ENCODE measurements at regions of chr12 and their contacts with region 1.

Region 1: GRCh38 chr12:50038336-50038735 is 13.0 kb upstream of the RACGAP1 start:
- DNase-seq: no peak
- H3K4me3 Mint-ChIP-seq: no peak overlapping the region
- H3K27ac Mint-ChIP-seq: no peak overlapping the region
- H3K4me1 Mint-ChIP-seq: peaks cover 4% of the 10 kb centered on the region
- H3K27me3 Mint-ChIP-seq: peaks cover 12% of the 10 kb centered on the region

Region 2: GRCh38 chr12:49959570-49960465 is 78.5 kb before region 1 on chr12:
- CTCF ChIA-PET with region 1: no interaction called
- POLR2A ChIA-PET with region 1: no interaction called
- DNase-seq: no peak
- H3K4me3 Mint-ChIP-seq: no peak overlapping the region
- H3K27ac Mint-ChIP-seq: no peak overlapping the region
- H3K4me1 Mint-ChIP-seq: peaks cover 7% of the 10 kb centered on the region
- H3K27me3 Mint-ChIP-seq: peaks cover 86% of the 10 kb centered on the region

Region 3: GRCh38 chr12:50006789-50007436 is 31.4 kb before region 1 on chr12:
- CTCF ChIA-PET with region 1: interaction called, 27 read pairs
- POLR2A ChIA-PET with region 1: no interaction called
- DNase-seq: no peak
- H3K4me3 Mint-ChIP-seq: no peak overlapping the region
- H3K27ac Mint-ChIP-seq: no peak overlapping the region
- H3K4me1 Mint-ChIP-seq: peaks cover 15% of the 10 kb centered on the region
- H3K27me3 Mint-ChIP-seq: no peaks in the 10 kb centered on the region

Region 4: DNA sequence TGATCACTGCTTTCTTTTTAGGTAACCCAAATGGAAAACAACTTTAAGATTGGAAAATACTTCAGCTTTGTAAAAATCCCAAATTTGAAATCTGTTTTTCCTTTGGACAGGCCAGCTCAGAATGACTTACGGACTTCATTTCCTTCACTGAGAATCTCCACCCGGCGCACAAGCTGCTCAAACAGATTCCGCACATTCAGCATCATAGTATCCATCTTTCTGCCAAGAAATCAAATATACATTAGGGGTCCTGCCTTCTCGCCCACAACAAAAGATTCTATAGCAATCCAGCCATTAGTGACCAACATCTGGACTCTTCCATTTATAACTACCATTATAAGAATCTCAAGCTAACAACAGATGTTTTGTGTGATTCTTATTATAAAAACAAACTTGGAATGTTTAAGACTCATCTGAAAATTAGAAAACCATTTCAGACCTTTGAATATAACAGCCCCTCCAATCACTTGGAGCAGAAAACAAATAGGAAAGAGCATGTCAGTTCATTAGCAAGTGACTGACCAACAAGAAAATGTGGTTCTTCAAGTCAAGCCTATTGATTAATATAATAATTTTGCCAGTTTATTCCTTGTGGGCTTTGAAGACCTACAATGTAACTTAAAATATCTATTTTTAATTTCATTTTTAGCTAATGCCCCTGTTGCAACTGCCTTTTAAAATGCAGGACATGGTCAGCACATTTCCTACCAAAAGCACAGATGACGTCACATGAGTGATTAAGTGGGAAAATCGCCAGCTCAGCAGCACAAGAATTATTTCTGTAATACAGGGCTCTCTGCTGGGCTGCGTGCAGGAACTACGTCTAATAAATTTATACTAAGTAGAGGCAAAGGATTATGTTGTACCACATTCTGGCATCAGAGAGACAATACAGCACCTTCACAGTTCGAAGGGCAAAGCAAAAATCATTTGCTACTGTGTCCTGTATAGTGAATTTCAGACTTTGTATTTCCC is 21.5 kb before region 1 on chr12:
- CTCF ChIA-PET with region 1: interaction called, 26 read pairs
- POLR2A ChIA-PET with region 1: interaction called, 3 read pairs
- DNase-seq: no peak
- H3K4me3 Mint-ChIP-seq: no peak overlapping the region
- H3K27ac Mint-ChIP-seq: no peak overlapping the region
- H3K4me1 Mint-ChIP-seq: peaks cover 42% of the 10 kb centered on the region
- H3K27me3 Mint-ChIP-seq: no peaks in the 10 kb centered on the region

Region 5: GRCh38 chr12:50025187-50026059 is 12.9 kb before region 1 on chr12 and contains the start of gene RACGAP1:
- CTCF ChIA-PET with region 1: interaction called, 26 read pairs
- POLR2A ChIA-PET with region 1: interaction called, 9 read pairs
- DNase-seq: peak; percentile 98
- H3K4me3 Mint-ChIP-seq: peak within 1 kb of the TSS; percentile 94
- H3K27ac Mint-ChIP-seq: peak within 1 kb of the TSS; percentile 96
- H3K4me1 Mint-ChIP-seq: peaks cover 44% of the 10 kb centered on the region
- H3K27me3 Mint-ChIP-seq: peaks cover 2% of the 10 kb centered on the region
- total RNA-seq, gene RACGAP1: 172 to 179 TPM

Region 6: DNA sequence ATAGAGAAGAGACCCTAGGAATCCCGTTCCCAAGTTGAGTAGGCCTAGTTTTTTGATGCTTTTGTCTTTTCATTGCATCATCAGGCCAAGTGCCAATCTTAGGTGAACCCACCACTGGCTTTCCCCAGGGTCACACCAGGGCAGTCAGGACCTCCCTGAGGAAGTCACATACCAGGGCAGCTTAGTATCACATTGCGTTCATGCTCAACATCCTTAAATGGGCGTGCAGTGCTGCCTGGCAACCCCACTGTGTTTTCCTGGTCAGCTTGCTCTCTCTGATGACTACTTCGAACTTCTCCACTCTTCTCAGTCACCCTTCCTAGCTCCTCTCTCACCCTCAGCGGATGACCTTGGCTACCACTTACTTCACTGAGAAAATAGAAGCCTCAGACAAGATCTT is 28.1 kb after region 1 on chr12:
- CTCF ChIA-PET with region 1: interaction called, 46 read pairs
- POLR2A ChIA-PET with region 1: interaction called, 3 read pairs
- DNase-seq: no peak
- H3K4me3 Mint-ChIP-seq: no peak overlapping the region
- H3K27ac Mint-ChIP-seq: no peak overlapping the region
- H3K4me1 Mint-ChIP-seq: peaks cover 6% of the 10 kb centered on the region
- H3K27me3 Mint-ChIP-seq: peaks cover 11% of the 10 kb centered on the region

Measured in activated CD4-positive, alpha-beta memory T cell treated with anti-CD3 and anti-CD28 coated beads, Interleukin-2, amount 10 ng/mL, durations not matched to agents 7 days and 5 days (primary cell).